GM10248 (cell line): ENCODE measurements at regions of chr16 and their contacts with region 1.

Region 1: GRCh38 chr16:19601083-19601976 is 45.8 kb downstream of the VPS35L start:
- DNase-seq: peak; percentile 24
- CTCF ChIP-seq: peak; percentile 47

Region 2: DNA sequence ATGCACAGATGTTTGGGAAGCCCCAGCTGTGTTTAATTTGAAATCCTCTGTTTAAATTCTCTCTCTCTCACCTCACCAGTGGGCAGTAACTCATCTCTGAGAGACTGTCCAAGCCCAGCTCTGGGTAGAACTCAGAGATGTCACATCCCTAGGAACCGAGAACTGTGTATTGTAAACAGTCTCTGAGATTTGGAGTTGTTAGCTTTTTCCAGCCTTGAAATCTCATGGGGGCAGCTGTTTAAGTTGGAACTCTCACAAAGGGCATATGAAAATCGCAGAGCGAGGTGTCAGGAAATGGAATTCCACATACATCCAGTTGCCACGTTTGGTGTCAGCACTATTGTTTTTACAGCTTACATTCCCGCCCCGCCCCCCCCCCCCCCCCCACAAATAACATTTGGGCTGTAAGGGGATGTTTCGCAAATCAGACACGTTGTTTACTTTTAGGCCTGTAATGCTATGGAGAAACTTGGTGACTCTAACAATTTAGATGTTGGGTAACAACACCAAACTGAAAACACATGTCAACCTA is 11.5 kb before region 1 on chr16:
- CTCF ChIA-PET with region 1: interaction called, 28 read pairs
- POLR2A ChIA-PET with region 1: no interaction called
- DNase-seq: no peak
- CTCF ChIP-seq: no peak